Dendritic cell treated with granulocyte-macrophage colony-stimulating factor and Interleukin-4, amounts not matched to agents 40 ng/mL and 50 ng/mL, for 4 days (primary cell): ENCODE measurements at regions of chr13 and their contacts with region 1.

Region 1: GRCh38 chr13:79541426-79542049 is 60.6 kb downstream of the NDFIP2 start:
- H3K4me3 Mint-ChIP-seq: no peak overlapping the region
- H3K27ac Mint-ChIP-seq: no peak overlapping the region
- H3K4me1 Mint-ChIP-seq: no peaks in the 10 kb centered on the region
- H3K27me3 Mint-ChIP-seq: no peaks in the 10 kb centered on the region

Region 2: DNA sequence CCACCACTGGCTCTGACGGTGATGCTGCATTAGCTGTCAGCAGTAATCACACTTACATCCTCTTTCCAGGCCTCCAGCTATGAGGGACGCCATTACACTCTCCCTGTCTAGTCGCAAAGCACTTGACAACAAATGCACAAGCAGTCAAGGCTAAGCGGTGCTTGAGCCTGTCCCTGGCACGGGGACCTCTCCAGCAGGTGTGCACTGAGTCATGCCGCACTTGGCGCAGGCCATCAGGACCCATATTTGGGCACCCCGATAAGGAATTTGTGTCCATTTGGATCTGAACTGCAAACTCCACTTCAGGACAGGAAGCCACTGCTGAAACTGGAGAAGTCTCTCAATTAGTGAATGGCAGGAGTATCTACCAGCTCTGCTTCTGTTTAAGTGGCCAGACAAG is 580.7 kb before region 1 on chr13:
- intact Hi-C with region 1: no loop called
- H3K4me3 Mint-ChIP-seq: no peak overlapping the region
- H3K27ac Mint-ChIP-seq: no peak overlapping the region
- H3K4me1 Mint-ChIP-seq: no peaks in the 10 kb centered on the region
- H3K27me3 Mint-ChIP-seq: no peaks in the 10 kb centered on the region

Region 3: DNA sequence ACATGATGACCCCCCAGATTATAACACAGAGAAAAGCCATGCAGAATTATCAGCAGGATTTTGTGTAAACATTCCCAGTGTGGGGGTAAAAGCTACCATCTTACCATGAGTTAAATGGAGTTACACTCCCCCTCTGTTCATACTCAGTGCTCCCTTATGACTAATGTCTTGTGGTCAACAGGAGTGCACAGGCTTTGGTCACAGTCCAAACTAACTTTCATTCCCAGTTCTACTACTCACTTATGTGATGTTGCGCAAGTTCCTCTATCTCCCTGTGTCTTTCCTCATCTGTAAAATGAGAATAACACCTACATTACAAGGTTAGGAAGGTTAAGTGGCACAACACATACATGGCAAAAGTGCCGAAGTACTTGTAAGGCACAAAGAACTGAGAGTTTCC is 413.4 kb before region 1 on chr13:
- intact Hi-C with region 1: no loop called
- H3K4me3 Mint-ChIP-seq: no peak overlapping the region
- H3K27ac Mint-ChIP-seq: no peak overlapping the region
- H3K4me1 Mint-ChIP-seq: no peaks in the 10 kb centered on the region
- H3K27me3 Mint-ChIP-seq: no peaks in the 10 kb centered on the region

Region 4: DNA sequence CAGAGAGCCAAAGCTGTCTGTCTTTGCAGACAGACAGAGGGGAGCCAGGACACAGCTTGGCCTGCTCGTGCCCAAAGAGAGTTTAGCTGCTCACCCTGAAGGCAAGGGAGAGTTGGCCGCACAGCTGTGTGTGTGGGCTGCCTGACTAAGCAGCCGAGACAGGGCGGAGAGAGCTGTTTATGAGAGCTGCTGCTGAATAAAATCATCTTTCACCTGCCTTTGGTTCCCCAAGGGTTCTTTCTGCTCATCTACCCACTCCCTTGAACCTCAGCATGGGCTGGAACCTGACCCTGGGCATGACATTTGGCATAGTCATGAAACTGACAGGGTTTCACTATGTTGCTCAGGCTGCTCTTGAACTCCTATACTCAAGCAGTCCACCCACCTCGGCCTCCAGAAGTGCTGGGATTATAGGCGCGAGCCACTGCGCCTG is 233.7 kb before region 1 on chr13:
- intact Hi-C with region 1: no loop called
- H3K4me3 Mint-ChIP-seq: no peak overlapping the region
- H3K27ac Mint-ChIP-seq: no peak overlapping the region
- H3K4me1 Mint-ChIP-seq: no peaks in the 10 kb centered on the region
- H3K27me3 Mint-ChIP-seq: no peaks in the 10 kb centered on the region

Region 5: DNA sequence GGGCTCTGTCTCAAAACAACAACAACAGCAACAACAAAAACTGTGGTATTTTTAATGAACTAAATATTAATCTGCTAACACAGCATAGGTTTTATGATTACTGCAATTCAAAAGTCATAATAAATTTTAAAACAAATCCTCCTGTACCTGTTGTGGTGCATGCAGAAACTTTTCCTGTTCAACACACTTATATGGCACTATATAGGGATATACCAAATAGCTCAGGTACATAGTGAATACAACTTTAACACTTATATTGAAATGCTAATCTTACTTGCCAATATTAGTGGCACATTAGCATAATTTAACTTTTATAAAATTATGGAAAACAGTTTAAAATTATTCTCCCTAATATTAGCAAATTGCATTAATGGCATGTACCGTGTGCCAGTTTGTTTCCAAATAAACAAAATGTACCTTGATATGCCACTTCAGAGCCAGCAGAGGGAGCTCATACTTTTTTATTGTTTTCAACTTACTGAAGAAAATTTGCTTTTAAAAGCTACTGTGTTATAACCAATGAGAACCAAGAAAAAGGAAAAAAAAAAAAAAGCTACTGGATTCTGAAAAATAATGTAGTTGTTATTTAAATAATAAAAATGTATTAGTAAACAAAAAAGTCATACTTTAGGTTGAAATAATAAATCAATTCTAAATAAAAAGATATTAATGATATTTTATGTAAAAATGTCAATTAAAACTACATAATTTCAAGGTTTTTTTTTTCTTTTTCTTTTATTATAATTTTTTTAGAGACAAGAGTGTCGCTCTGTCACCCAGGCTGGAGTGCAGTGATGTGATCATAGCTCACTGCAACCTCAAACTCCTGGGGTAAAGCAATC is 117.5 kb before region 1 on chr13:
- intact Hi-C with region 1: loop called (anchors 1 kb)
- H3K4me3 Mint-ChIP-seq: no peak overlapping the region
- H3K27ac Mint-ChIP-seq: no peak overlapping the region
- H3K4me1 Mint-ChIP-seq: no peaks in the 10 kb centered on the region
- H3K27me3 Mint-ChIP-seq: peaks cover 1% of the 10 kb centered on the region